B cell (primary cell): ENCODE measurements at regions of chr14 and their contacts with region 1.

Region 1: DNA sequence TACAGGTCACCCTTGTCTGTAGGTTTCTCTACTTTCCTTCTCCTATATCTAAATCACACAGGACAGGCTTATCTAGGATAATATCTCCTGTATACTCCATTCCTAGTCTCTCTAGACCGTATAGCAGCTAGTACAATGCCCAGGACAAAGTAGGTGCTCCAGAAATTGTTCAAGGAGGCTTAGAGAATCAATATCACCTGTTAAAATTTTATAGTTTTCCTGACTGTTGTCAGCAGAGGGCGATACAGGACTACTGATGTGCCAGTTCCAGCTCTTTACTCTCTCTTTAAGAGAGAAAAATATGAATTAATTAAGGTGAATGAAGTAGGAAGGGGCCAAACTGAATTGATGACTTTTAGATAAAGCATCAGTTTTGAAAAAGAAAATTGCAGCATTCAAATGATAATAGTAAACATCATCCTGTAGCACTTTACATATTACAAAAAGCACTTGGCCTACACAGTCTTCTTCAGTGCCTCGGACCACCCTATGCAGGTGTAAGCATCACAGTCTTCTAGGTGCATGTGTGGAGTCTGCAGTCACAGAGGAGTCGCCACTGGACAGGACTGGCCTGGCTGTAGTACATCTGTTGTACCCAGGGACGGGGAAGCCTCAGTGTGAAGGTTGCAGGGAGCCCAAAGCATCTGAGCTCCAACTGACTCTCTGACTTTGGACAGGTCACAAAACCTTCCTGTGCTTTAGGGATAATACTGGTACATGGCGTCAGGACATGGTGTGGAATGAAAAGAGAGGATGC is 61.9 kb upstream of the MAX start:
- DNase-seq: peak; percentile 78
- ATAC-seq: peak; percentile 45
- H3K4me3 ChIP-seq: no peak overlapping the region
- H3K4me3 Mint-ChIP-seq: no peak overlapping the region
- H3K27ac ChIP-seq: no peak overlapping the region
- H3K27ac Mint-ChIP-seq: no peak overlapping the region
- H3K4me1 ChIP-seq: peaks cover 17 to 32% of the 10 kb centered on the region in 2 donors
- H3K4me1 Mint-ChIP-seq: peaks cover 54% of the 10 kb centered on the region
- H3K27me3 ChIP-seq: no peaks in the 10 kb centered on the region
- H3K27me3 Mint-ChIP-seq: no peaks in the 10 kb centered on the region
- CTCF ChIP-seq: peak; percentile 91

Region 2: GRCh38 chr14:65080960-65081747 is 83.1 kb before region 1 on chr14:
- CTCF ChIA-PET with region 1: no interaction called
- POLR2A ChIA-PET with region 1: no interaction called
- intact Hi-C with region 1: no loop called
- DNase-seq: no peak
- ATAC-seq: no peak
- H3K4me3 ChIP-seq: no peak overlapping the region
- H3K4me3 Mint-ChIP-seq: no peak overlapping the region
- H3K27ac ChIP-seq: no peak overlapping the region
- H3K27ac Mint-ChIP-seq: no peak overlapping the region
- H3K4me1 ChIP-seq: peaks cover 0 to 12% of the 10 kb centered on the region in 2 donors
- H3K4me1 Mint-ChIP-seq: peaks cover 35% of the 10 kb centered on the region
- H3K27me3 ChIP-seq: no peaks in the 10 kb centered on the region
- H3K27me3 Mint-ChIP-seq: no peaks in the 10 kb centered on the region
- CTCF ChIP-seq: no peak

Region 3: GRCh38 chr14:65102441-65103149 is 61.7 kb before region 1 on chr14 and contains the start of gene MAX:
- CTCF ChIA-PET with region 1: interaction called, 8 read pairs
- POLR2A ChIA-PET with region 1: interaction called, 5 read pairs
- intact Hi-C with region 1: loop called (anchors 1 kb)
- DNase-seq: peak; percentile 98
- ATAC-seq: peak; percentile 85
- H3K4me3 ChIP-seq: peak within 1 kb of the TSS; percentile 62 to 97 (median 93)
- H3K4me3 Mint-ChIP-seq: peak within 1 kb of the TSS; percentile 91
- H3K27ac ChIP-seq: peak within 1 kb of the TSS; percentile 95 to 97
- H3K27ac Mint-ChIP-seq: peak within 1 kb of the TSS; percentile 97
- H3K4me1 ChIP-seq: peaks cover 23 to 30% of the 10 kb centered on the region in 2 donors
- H3K4me1 Mint-ChIP-seq: peaks cover 38% of the 10 kb centered on the region
- H3K27me3 ChIP-seq: no peaks in the 10 kb centered on the region
- H3K27me3 Mint-ChIP-seq: no peaks in the 10 kb centered on the region
- CTCF ChIP-seq: no peak
- total RNA-seq, gene MAX: 127 and 130 TPM in 2 replicates

Region 4: DNA sequence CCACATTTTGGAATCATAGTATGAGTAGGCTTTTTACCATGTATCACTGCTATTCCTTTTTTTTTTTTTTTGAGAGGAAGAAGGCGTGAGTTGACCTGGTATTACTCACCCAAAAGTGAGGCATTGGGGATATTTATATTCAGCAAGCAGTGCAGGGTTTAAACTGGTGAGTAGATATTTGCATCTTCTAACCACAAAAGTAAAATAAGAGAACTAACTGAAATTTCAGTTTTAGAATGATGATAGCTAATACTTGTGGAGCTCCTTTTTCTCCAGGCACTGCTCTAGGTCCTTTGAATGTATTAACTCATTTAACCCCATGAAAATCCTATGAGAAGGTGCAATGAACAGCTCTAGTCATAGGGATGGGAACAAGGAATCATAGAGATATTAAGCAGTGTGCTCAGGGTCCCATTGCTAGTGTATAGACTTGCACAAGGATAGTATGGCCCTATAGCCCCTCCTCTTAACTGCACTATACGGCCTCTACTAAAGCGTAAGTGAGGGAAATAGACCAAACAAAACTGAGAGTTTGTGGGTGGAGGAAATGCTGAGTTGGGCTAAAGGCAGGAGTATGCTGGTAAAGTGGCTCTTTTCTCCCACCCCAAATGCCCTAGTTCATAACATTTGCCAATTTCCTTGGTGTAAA is 42.3 kb after region 1 on chr14:
- CTCF ChIA-PET with region 1: interaction called, 36 read pairs
- POLR2A ChIA-PET with region 1: interaction called, 17 read pairs
- intact Hi-C with region 1: loop called (anchors 2 kb)
- DNase-seq: peak; percentile 82
- ATAC-seq: peak; percentile 59
- H3K4me3 ChIP-seq: peak overlapping the region in 4 of 5 experiments; percentile 1 to 41 (median 24)
- H3K4me3 Mint-ChIP-seq: peak overlapping the region; percentile 79
- H3K27ac ChIP-seq: peak overlapping the region; percentile 91
- H3K27ac Mint-ChIP-seq: peak overlapping the region; percentile 90
- H3K4me1 ChIP-seq: peaks cover 86 to 88% of the 10 kb centered on the region in 2 donors
- H3K4me1 Mint-ChIP-seq: peaks cover 82% of the 10 kb centered on the region
- H3K27me3 ChIP-seq: no peaks in the 10 kb centered on the region
- H3K27me3 Mint-ChIP-seq: no peaks in the 10 kb centered on the region
- CTCF ChIP-seq: no peak

Region 5: DNA sequence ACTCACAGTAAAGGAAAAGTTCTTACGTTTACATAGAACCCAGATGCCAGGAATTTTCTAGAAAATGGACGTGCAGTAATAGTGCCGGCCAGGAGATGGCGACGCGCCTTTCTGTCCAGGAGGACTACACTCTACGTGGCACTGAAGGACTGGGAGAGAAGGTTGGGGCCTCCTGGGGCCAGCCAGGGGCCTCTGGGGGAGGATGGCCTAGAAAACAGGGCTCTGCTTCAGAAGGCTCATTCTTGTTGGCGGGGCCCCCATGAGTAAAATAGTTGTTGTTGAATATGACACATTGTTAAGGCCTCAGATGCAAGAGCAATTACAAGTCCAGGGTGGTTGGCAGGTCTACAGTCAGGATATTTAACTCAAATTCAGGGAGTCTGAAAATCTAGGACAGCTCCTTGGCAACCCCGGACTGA is 58.2 kb after region 1 on chr14:
- CTCF ChIA-PET with region 1: interaction called, 26 read pairs
- POLR2A ChIA-PET with region 1: no interaction called
- intact Hi-C with region 1: no loop called
- DNase-seq: peak; percentile 72
- ATAC-seq: peak; percentile 89
- H3K4me3 ChIP-seq: no peak overlapping the region
- H3K4me3 Mint-ChIP-seq: no peak overlapping the region
- H3K27ac ChIP-seq: no peak overlapping the region
- H3K27ac Mint-ChIP-seq: peak overlapping the region; percentile 39
- H3K4me1 ChIP-seq: peaks cover 42 to 56% of the 10 kb centered on the region in 2 donors
- H3K4me1 Mint-ChIP-seq: peaks cover 49% of the 10 kb centered on the region
- H3K27me3 ChIP-seq: no peaks in the 10 kb centered on the region
- H3K27me3 Mint-ChIP-seq: no peaks in the 10 kb centered on the region
- CTCF ChIP-seq: peak; percentile 87

Region 6: GRCh38 chr14:65255536-65256461 is 91.6 kb after region 1 on chr14:
- CTCF ChIA-PET with region 1: interaction called, 10 read pairs
- POLR2A ChIA-PET with region 1: no interaction called
- intact Hi-C with region 1: no loop called
- DNase-seq: peak; percentile 34
- ATAC-seq: peak; percentile 53
- H3K4me3 ChIP-seq: no peak overlapping the region
- H3K4me3 Mint-ChIP-seq: no peak overlapping the region
- H3K27ac ChIP-seq: no peak overlapping the region
- H3K27ac Mint-ChIP-seq: no peak overlapping the region
- H3K4me1 ChIP-seq: peaks cover 16 to 18% of the 10 kb centered on the region in 2 donors
- H3K4me1 Mint-ChIP-seq: peaks cover 35% of the 10 kb centered on the region
- H3K27me3 ChIP-seq: no peaks in the 10 kb centered on the region
- H3K27me3 Mint-ChIP-seq: no peaks in the 10 kb centered on the region
- CTCF ChIP-seq: no peak

Region 7: DNA sequence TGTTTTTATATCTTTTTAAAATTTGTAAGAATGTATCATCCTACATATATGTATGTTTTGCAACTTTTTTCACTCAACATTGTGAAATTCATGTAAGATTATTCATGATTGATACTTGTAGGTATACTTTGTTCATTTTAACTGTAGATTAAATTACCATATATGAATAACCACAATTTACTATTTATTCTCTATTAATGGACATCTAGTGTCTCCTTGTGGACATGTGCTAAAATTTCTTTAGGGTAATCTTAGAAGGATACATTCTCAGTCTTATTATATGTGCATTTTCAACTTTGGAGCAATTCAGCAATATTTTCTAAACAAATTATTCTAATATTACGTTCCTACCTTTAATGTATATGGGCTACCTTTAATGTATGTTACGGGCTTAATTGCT is 440.7 kb after region 1 on chr14:
- CTCF ChIA-PET with region 1: interaction called, 4 read pairs
- POLR2A ChIA-PET with region 1: no interaction called
- intact Hi-C with region 1: loop called (anchors 1 kb)
- DNase-seq: peak; percentile 22
- ATAC-seq: no peak
- H3K4me3 ChIP-seq: peak overlapping the region in 1 of 5 experiments; percentile 21
- H3K4me3 Mint-ChIP-seq: no peak overlapping the region
- H3K27ac ChIP-seq: peak overlapping the region in 1 of 2 donors; percentile 61
- H3K27ac Mint-ChIP-seq: no peak overlapping the region
- H3K4me1 ChIP-seq: peaks cover 11 to 18% of the 10 kb centered on the region in 2 donors
- H3K4me1 Mint-ChIP-seq: peaks cover 12% of the 10 kb centered on the region
- H3K27me3 ChIP-seq: no peaks in the 10 kb centered on the region
- H3K27me3 Mint-ChIP-seq: no peaks in the 10 kb centered on the region
- CTCF ChIP-seq: peak; percentile 70

Region 8: GRCh38 chr14:65958664-65959562 is 794.7 kb after region 1 on chr14:
- CTCF ChIA-PET with region 1: interaction called, 69 read pairs
- POLR2A ChIA-PET with region 1: no interaction called
- intact Hi-C with region 1: no loop called
- DNase-seq: peak; percentile 60
- ATAC-seq: peak; percentile 41
- H3K4me3 ChIP-seq: no peak overlapping the region
- H3K4me3 Mint-ChIP-seq: no peak overlapping the region
- H3K27ac ChIP-seq: no peak overlapping the region
- H3K27ac Mint-ChIP-seq: no peak overlapping the region
- H3K4me1 ChIP-seq: no peaks in the 10 kb centered on the region
- H3K4me1 Mint-ChIP-seq: no peaks in the 10 kb centered on the region
- H3K27me3 ChIP-seq: peaks cover 0 to 15% (median 7%) of the 10 kb centered on the region in 4 experiments
- H3K27me3 Mint-ChIP-seq: peaks cover 30% of the 10 kb centered on the region
- CTCF ChIP-seq: peak; percentile 74